Sigmoid colon (tissue), 7 donors: ENCODE measurements at regions of chr12 and their contacts with region 1.

Region 1: GRCh38 chr12:120181991-120182631 is 12.4 kb downstream of the GCN1 start:
- DNase-seq: no peak
- H3K4me3 ChIP-seq: no peak overlapping the region
- H3K27ac ChIP-seq: no peak overlapping the region
- H3K4me1 ChIP-seq: no peaks in the 10 kb centered on the region
- H3K27me3 ChIP-seq: no peaks in the 10 kb centered on the region
- CTCF ChIP-seq: no peak
- EP300 ChIP-seq: no peak
- POLR2A ChIP-seq: no peak

Region 2: GRCh38 chr12:119423285-119423684 is 758.8 kb before region 1 on chr12:
- intact Hi-C with region 1: no loop called
- DNase-seq: no peak
- H3K4me3 ChIP-seq: no peak overlapping the region
- H3K27ac ChIP-seq: no peak overlapping the region
- H3K4me1 ChIP-seq: no peaks in the 10 kb centered on the region
- H3K27me3 ChIP-seq: no peaks in the 10 kb centered on the region
- CTCF ChIP-seq: no peak
- EP300 ChIP-seq: no peak
- POLR2A ChIP-seq: no peak

Region 3: GRCh38 chr12:120041386-120042231 is 140.5 kb before region 1 on chr12:
- intact Hi-C with region 1: no loop called
- DNase-seq: no peak
- H3K4me3 ChIP-seq: no peak overlapping the region
- H3K27ac ChIP-seq: no peak overlapping the region
- H3K4me1 ChIP-seq: no peaks in the 10 kb centered on the region
- H3K27me3 ChIP-seq: peaks cover 0 to 13% (median 4%) of the 10 kb centered on the region in 3 donors
- CTCF ChIP-seq: no peak
- EP300 ChIP-seq: no peak
- POLR2A ChIP-seq: no peak

Region 4: GRCh38 chr12:120110550-120111501 is 71.3 kb before region 1 on chr12:
- intact Hi-C with region 1: no loop called
- DNase-seq: peak; percentile 84
- H3K4me3 ChIP-seq: no peak overlapping the region
- H3K27ac ChIP-seq: peak overlapping the region in 1 of 4 donors; percentile 3
- H3K4me1 ChIP-seq: peaks cover 0 to 66% (median 24%) of the 10 kb centered on the region in 4 donors
- H3K27me3 ChIP-seq: no peaks in the 10 kb centered on the region
- CTCF ChIP-seq: no peak
- EP300 ChIP-seq: no peak
- POLR2A ChIP-seq: no peak

Region 5: DNA sequence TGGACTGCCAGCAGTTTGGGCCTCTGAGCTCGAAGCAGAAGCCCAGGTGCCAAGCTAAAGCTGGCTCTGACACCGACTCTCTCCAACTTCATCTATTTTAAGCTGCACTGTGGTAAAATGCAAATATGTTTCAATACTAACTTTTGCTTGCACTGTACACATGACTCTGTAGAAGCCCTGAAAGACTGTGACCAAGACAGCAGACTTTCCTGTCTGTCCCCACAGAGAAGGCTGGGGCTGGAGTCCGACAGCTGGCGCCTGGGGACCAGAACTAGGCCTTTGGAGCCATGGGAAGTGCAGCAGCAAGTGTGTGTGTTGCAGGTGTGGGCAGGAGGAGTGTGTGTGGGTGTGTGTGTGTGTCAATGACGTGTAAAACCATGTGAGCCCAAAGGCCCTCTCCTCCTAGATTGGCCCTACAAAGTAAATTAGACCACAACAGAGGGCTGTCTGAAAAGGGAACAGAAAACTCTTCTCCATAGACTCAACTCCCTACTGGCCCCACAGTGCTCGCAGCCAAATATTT is 49.2 kb before region 1 on chr12:
- intact Hi-C with region 1: no loop called
- DNase-seq: no peak
- H3K4me3 ChIP-seq: no peak overlapping the region
- H3K27ac ChIP-seq: no peak overlapping the region
- H3K4me1 ChIP-seq: no peaks in the 10 kb centered on the region
- H3K27me3 ChIP-seq: no peaks in the 10 kb centered on the region
- CTCF ChIP-seq: no peak
- EP300 ChIP-seq: no peak
- POLR2A ChIP-seq: no peak

Region 6: GRCh38 chr12:120799243-120800045 is 617.3 kb after region 1 on chr12:
- intact Hi-C with region 1: loop called (anchors 10 kb)
- DNase-seq: no peak
- H3K4me3 ChIP-seq: no peak overlapping the region
- H3K27ac ChIP-seq: no peak overlapping the region
- H3K4me1 ChIP-seq: no peaks in the 10 kb centered on the region
- H3K27me3 ChIP-seq: no peaks in the 10 kb centered on the region
- CTCF ChIP-seq: no peak
- EP300 ChIP-seq: no peak
- POLR2A ChIP-seq: no peak